Heart right ventricle (tissue), 16 donors: ENCODE measurements at regions of chr6 and their contacts with region 1.

Region 1: GRCh38 chr6:106979427-106979884 is 4.9 kb upstream of the CD24 start:
- DNase-seq: peak; percentile 79 to 83
- ATAC-seq: peak; percentile 49 to 88 (median 76)
- H3K4me3 ChIP-seq: no peak overlapping the region
- H3K27ac ChIP-seq: no peak overlapping the region
- H3K4me1 ChIP-seq: peaks cover 2 to 11% (median 6%) of the 10 kb centered on the region in 9 donors
- H3K27me3 ChIP-seq: peaks cover 14 to 93% (median 75%) of the 10 kb centered on the region in 7 donors
- CTCF ChIP-seq: peak; percentile 86 to 96 (median 94)

Region 2: DNA sequence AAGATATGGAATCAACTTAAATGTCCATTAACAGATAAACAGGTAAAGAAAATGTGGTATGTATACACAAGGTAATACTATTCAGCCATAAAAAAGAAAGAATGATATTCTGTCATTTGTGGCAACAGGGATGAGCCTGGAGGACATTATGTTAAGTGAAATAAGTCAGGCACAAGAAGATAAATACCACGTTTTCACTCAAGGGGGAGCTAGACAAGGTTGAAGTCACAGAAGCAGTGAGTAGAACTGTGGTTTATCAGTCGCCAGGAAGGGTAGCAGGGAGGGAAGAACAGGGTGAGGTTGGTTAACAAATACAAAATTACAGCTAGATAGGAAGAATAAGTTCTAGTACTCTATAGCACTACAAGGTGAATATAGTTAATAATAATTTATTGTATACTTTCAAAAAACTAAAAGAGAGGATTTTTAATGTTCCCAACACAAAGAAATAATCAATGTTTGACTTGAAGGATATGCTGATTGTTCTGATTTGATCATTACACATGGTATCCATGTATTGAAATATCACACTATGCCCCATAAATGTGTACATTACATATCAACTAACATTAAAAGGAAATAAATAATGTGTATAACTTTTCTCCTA is 371.3 kb before region 1 on chr6:
- intact Hi-C with region 1: loop called in 5 of 10 experiments (anchors 5 to 10 kb)
- DNase-seq: no peak
- ATAC-seq: no peak
- H3K4me3 ChIP-seq: no peak overlapping the region
- H3K27ac ChIP-seq: no peak overlapping the region
- H3K4me1 ChIP-seq: no peaks in the 10 kb centered on the region
- H3K27me3 ChIP-seq: no peaks in the 10 kb centered on the region
- CTCF ChIP-seq: peak in 8 of 9 donors; percentile 9 to 61 (median 38)

Region 3: DNA sequence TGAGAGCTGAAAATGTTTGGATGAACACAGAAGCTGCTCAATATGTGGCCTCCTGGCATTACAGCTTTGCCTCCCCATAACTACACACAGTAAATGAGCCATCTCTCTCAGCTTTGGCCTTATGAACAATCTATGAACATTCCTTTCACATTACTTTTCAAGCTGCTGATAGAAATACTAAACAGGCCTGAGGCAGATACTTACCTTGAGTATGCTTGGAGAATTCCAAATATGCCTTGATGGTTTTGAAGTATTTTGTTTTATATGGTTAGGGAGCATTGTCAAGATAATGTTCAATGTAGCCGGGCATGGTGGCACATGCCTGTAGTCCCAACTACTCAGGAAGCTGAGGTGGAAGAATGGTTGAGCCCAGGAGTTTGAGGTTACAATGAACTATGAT is 109.4 kb before region 1 on chr6:
- intact Hi-C with region 1: no loop called
- DNase-seq: no peak
- ATAC-seq: no peak
- H3K4me3 ChIP-seq: no peak overlapping the region
- H3K27ac ChIP-seq: no peak overlapping the region
- H3K4me1 ChIP-seq: no peaks in the 10 kb centered on the region
- H3K27me3 ChIP-seq: no peaks in the 10 kb centered on the region
- CTCF ChIP-seq: no peak